AG04449 (cell line): ENCODE measurements at regions of chr2 and their contacts with region 1.

Region 1: GRCh38 chr2:86793752-86794151 is 3.0 kb upstream of the CD8A start:
- DNase-seq: no peak
- H3K4me3 ChIP-seq: no peak overlapping the region
- CTCF ChIP-seq: no peak

Region 2: GRCh38 chr2:86808315-86809161 is 14.8 kb after region 1 on chr2:
- CTCF ChIA-PET with region 1: interaction called, 14 read pairs
- POLR2A ChIA-PET with region 1: no interaction called
- DNase-seq: peak; percentile 5
- H3K4me3 ChIP-seq: peak overlapping the region; percentile 46
- CTCF ChIP-seq: peak; percentile 94